Upper lobe of right lung (tissue), 1 donor: ENCODE measurements at regions of chr10 and their contacts with region 1.

Region 1: GRCh38 chr10:84360637-84361365 is 32.4 kb downstream of the CCSER2 start:
- DNase-seq: no peak
- ATAC-seq: peak; percentile 66
- H3K4me3 ChIP-seq: peak overlapping the region; percentile 44
- H3K27ac ChIP-seq: peak overlapping the region; percentile 56
- H3K4me1 ChIP-seq: peaks cover 32% of the 10 kb centered on the region
- H3K27me3 ChIP-seq: no peaks in the 10 kb centered on the region
- CTCF ChIP-seq: no peak

Region 2: DNA sequence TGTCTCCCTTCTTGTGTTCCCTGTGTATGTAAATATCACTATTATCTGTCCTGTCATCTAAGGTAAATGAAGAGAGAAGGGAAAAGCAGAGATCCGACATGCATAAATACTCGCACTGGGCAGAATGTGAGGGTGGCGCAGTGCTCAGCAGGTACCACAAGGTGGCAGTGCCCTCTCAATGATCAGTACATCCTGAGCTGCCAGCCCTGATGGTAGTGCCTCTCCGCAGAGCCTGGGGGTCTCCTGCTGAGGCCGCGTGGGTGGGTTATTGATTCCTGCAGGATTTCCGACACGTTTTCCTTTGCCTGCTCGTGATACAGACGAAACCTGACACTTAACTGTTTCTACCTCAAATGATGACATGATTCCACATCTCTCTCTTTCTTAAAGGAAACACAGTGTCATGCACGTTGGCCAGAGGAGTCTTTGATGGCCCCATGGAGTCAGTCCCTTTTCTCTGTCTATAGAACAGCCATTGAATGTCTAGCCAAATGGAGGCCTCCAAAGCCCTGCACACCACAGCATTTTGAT is 96.1 kb before region 1 on chr10:
- intact Hi-C with region 1: loop called (anchors 10 kb)
- DNase-seq: peak; percentile 77
- ATAC-seq: peak; percentile 94
- H3K4me3 ChIP-seq: no peak overlapping the region
- H3K27ac ChIP-seq: no peak overlapping the region
- H3K4me1 ChIP-seq: peaks cover 4% of the 10 kb centered on the region
- H3K27me3 ChIP-seq: no peaks in the 10 kb centered on the region
- CTCF ChIP-seq: peak; percentile 96